Spleen (tissue), 13 donors: ENCODE measurements at regions of chr11 and their contacts with region 1.

Region 1: GRCh38 chr11:95067039-95067840 is 521 bp downstream of the SRSF8 start:
- DNase-seq: peak; percentile 95
- H3K4me3 ChIP-seq: peak overlapping the region; percentile 63 to 84 (median 70)
- H3K27ac ChIP-seq: peak overlapping the region; percentile 97 to 99 (median 98)
- H3K4me1 ChIP-seq: peaks cover 14 to 50% (median 35%) of the 10 kb centered on the region in 6 donors
- H3K27me3 ChIP-seq: no peaks in the 10 kb centered on the region
- CTCF ChIP-seq: peak in 10 of 11 experiments; percentile 28 to 75 (median 68)
- POLR2A ChIP-seq: peak in 2 of 3 donors; percentile 3 to 21

Region 2: GRCh38 chr11:94973099-94973968 is 93.9 kb before region 1 on chr11 and contains the starts of genes CWC15 and KDM4D:
- intact Hi-C with region 1: loop called (anchors 10 kb)
- DNase-seq: peak; percentile 98
- H3K4me3 ChIP-seq: peak within 1 kb of the TSS; percentile 74 to 98 (median 88)
- H3K27ac ChIP-seq: peak within 1 kb of the TSS; percentile 72 to 88 (median 86)
- H3K4me1 ChIP-seq: peaks cover 10 to 40% (median 21%) of the 10 kb centered on the region in 6 donors
- H3K27me3 ChIP-seq: no peaks in the 10 kb centered on the region
- CTCF ChIP-seq: peak in 2 of 11 experiments; percentile 8 to 20
- POLR2A ChIP-seq: peak in 1 of 3 donors; percentile 2
- total RNA-seq, gene CWC15: 40.6 to 64.5 (median 57.4) TPM
- total RNA-seq, gene KDM4D: 0.67 to 2.8 (median 1.1) TPM

Region 3: GRCh38 chr11:95119374-95120060 is 52.3 kb after region 1 on chr11:
- intact Hi-C with region 1: no loop called
- DNase-seq: no peak
- H3K4me3 ChIP-seq: no peak overlapping the region
- H3K27ac ChIP-seq: no peak overlapping the region
- H3K4me1 ChIP-seq: peaks cover 0 to 12% (median 0%) of the 10 kb centered on the region in 6 donors
- H3K27me3 ChIP-seq: no peaks in the 10 kb centered on the region
- CTCF ChIP-seq: no peak
- POLR2A ChIP-seq: no peak